ENCODE measurements at regions of chr1 and their contacts with region 1.

Region 1: DNA sequence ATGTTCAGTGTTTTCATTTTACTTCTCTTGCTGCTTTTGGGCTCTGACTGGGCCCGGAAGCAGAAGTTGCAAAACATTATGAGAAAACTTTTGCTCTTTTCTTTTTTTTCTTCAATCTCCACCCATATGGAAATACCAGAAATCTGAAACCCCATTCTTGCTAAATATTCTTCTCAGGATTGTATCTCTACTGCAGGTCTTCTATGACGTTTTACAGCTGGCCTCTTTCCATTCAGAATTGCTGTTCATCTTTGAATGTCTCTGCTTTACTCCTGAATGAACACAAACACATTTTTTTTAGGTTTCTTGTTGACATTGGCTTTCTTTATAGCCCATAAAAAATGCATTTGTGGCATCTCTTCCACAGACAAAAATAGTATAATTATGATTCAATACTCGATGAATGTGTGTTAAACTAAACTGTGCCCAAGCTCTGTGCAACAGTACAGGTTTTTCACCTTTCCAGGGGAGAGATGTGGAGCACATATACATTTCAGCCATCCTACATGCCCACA is 18.8 kb downstream of the PTPRC start:
- DNase-seq: peak in 12 of 35 experiments; percentile 19 to 79 (median 28)
- ATAC-seq: peak; percentile 38 to 48 (median 42)
- H3K4me3 ChIP-seq: peak overlapping the region; percentile 4 to 15
- H3K4me3 Mint-ChIP-seq: peak overlapping the region; percentile 65 to 85 (median 73)
- H3K27ac ChIP-seq: peak overlapping the region; percentile 87
- H3K27ac Mint-ChIP-seq: peak overlapping the region; percentile 97 to 98
- H3K4me1 ChIP-seq: peaks cover 22 to 77% of the 10 kb centered on the region in 2 experiments
- H3K4me1 Mint-ChIP-seq: peaks cover 74 to 82% (median 76%) of the 10 kb centered on the region in 3 donors
- H3K27me3 ChIP-seq: no peaks in the 10 kb centered on the region
- H3K27me3 Mint-ChIP-seq: no peaks in the 10 kb centered on the region

Region 2: GRCh38 chr1:198638894-198639635 is 18.5 kb before region 1 on chr1 and contains the start of gene PTPRC:
- CTCF ChIA-PET with region 1: interaction called in 1 of 2 experiments, 6 read pairs
- POLR2A ChIA-PET with region 1: interaction called in 1 of 2 experiments, 38 read pairs
- DNase-seq: peak in 4 of 35 experiments; percentile 23 to 76 (median 26)
- ATAC-seq: peak; percentile 76 to 84 (median 81)
- H3K4me3 ChIP-seq: peak within 1 kb of the TSS; percentile 70 to 80
- H3K4me3 Mint-ChIP-seq: peak within 1 kb of the TSS; percentile 79 to 98 (median 81)
- H3K27ac ChIP-seq: peak within 1 kb of the TSS; percentile 85
- H3K27ac Mint-ChIP-seq: peak within 1 kb of the TSS; percentile 95 to 99
- H3K4me1 ChIP-seq: peaks cover 19 to 48% of the 10 kb centered on the region in 2 experiments
- H3K4me1 Mint-ChIP-seq: peaks cover 52 to 70% (median 59%) of the 10 kb centered on the region in 3 donors
- H3K27me3 ChIP-seq: no peaks in the 10 kb centered on the region
- H3K27me3 Mint-ChIP-seq: no peaks in the 10 kb centered on the region
- total RNA-seq, gene PTPRC: 674 to 984 (median 781) TPM

Region 3: DNA sequence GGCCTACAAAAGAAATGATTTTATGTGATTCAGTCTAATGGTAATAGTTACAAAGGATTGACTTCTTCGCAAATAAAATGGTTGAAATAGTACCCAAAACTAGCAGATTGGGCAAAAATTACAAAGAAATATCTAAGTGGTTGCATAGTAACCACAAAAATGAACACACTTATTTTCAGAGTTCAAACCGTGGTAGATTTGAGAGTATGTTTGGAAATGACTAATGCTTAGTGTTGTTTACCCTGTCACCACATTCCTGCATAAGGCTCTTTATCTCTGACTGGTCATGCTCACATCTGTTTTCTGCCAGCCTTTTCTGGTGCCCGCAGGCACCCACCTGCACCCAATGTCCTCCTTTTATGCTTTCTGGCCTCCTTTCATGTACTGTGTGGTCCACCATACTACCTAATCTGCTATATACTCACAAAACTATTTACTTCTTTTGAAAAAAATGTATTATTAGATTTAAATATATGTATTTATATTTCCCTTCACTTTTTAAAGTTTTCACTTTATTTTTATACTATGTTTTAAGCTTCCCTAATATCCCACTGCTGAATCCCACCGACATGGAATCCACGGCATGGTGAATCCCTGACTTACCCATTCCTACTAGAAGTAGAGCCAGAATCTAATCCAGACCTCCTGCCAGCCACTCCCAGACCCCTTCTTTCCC is 11.6 kb after region 1 on chr1:
- CTCF ChIA-PET with region 1: interaction called, 3 to 6 read pairs
- POLR2A ChIA-PET with region 1: interaction called, 6 to 41 read pairs
- DNase-seq: peak in 6 of 35 experiments; percentile 18 to 75 (median 24)
- ATAC-seq: peak; percentile 65 to 89 (median 86)
- H3K4me3 ChIP-seq: no peak overlapping the region
- H3K4me3 Mint-ChIP-seq: peak overlapping the region; percentile 61 to 71 (median 69)
- H3K27ac ChIP-seq: peak overlapping the region; percentile 94
- H3K27ac Mint-ChIP-seq: peak overlapping the region; percentile 97 to 98
- H3K4me1 ChIP-seq: peaks cover 43 to 82% of the 10 kb centered on the region in 2 experiments
- H3K4me1 Mint-ChIP-seq: peaks cover 87 to 89% (median 89%) of the 10 kb centered on the region in 3 donors
- H3K27me3 ChIP-seq: no peaks in the 10 kb centered on the region
- H3K27me3 Mint-ChIP-seq: no peaks in the 10 kb centered on the region

Region 4: DNA sequence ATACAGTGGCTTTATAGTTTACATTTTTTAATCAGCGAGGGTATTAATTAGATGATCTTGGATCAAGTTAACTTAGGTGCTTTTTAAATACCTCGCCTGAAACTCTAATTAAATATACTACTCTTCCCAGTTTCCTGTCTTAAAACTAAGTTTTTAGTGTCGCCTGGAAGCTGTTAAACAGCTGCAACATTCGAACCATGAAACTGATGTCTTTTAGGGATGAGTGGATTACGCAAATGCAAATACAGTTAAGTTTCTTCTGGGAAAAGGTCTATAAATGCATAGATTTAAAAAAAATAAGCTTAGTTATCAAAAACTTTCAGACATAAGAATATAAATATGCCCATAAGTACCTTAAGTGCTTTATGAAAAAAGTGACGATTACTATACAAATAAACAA is 209.6 kb after region 1 on chr1:
- CTCF ChIA-PET with region 1: no interaction called
- POLR2A ChIA-PET with region 1: no interaction called
- DNase-seq: no peak
- ATAC-seq: no peak
- H3K4me3 ChIP-seq: no peak overlapping the region
- H3K4me3 Mint-ChIP-seq: no peak overlapping the region
- H3K27ac ChIP-seq: no peak overlapping the region
- H3K27ac Mint-ChIP-seq: no peak overlapping the region
- H3K4me1 ChIP-seq: no peaks in the 10 kb centered on the region
- H3K4me1 Mint-ChIP-seq: peaks cover 0 to 2% (median 0%) of the 10 kb centered on the region in 3 donors
- H3K27me3 ChIP-seq: no peaks in the 10 kb centered on the region
- H3K27me3 Mint-ChIP-seq: no peaks in the 10 kb centered on the region